Endothelial cell of umbilical vein (primary cell): ENCODE measurements at regions of chr15 and their contacts with region 1.

Region 1: GRCh38 chr15:51192521-51193280 is 98.0 kb upstream of the TNFAIP8L3 start:
- DNase-seq: peak; percentile 85
- H3K4me3 ChIP-seq: no peak overlapping the region
- H3K27ac ChIP-seq: no peak overlapping the region
- H3K4me1 ChIP-seq: peaks cover 18% of the 10 kb centered on the region
- H3K27me3 ChIP-seq: peaks cover 33 to 45% of the 10 kb centered on the region in 2 experiments
- CTCF ChIP-seq: peak; percentile 93 to 94
- POLR2A ChIP-seq: no peak

Region 2: DNA sequence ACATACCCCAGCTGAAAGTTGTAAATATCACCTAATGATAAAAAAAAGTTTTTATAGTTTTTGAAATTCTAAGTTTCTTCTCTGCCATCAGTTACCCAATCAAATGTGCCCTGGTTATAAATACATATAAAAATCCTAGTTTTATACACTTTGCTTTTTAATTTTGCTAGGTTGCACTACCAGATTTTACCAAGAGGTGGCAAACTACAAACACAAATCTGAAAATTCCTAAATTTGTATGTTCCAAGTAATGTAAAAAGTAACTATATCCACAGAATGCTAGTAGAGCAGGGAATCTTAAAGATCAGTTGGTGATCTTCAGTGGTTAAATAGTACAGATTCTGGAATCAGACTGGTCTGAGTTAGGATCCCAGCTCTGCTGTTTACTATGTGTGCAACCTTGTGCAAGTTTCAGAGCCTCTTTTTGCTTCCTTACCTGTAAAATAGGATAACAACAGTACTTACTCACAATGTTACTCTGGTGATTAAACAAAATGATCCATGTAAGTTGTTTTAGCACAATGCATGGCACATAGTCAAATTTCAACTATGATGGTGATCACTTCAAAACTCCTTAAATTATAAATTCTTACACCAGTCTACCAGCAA is 517.1 kb before region 1 on chr15:
- CTCF ChIA-PET with region 1: interaction called, 4 read pairs
- POLR2A ChIA-PET with region 1: no interaction called
- dilution Hi-C with region 1: no loop called
- intact Hi-C with region 1: loop called (anchors 5 kb)
- DNase-seq: peak; percentile 69
- H3K4me3 ChIP-seq: no peak overlapping the region
- H3K27ac ChIP-seq: no peak overlapping the region
- H3K4me1 ChIP-seq: no peaks in the 10 kb centered on the region
- H3K27me3 ChIP-seq: no peaks in the 10 kb centered on the region
- CTCF ChIP-seq: peak; percentile 36 to 41
- POLR2A ChIP-seq: no peak

Region 3: DNA sequence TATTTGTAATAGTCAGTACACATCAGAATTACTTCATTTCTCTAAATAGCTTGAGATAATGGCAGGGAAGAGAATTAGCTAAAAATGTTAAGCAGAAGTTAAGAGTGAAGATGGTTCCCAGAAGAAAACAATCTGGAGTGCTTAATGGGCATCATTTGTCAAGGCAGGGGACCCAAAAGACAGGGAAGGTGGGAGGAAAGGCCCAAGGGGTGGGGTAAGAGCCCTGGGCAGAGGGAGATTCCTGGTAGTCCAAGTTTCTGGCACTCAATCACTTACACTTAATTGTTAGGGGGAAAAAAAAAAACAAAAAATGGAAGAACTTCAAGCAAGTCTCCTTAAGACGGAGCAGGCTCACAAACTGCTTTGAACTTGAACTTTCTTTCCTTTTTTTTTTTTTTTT is 126.9 kb before region 1 on chr15:
- CTCF ChIA-PET with region 1: interaction called, 10 read pairs
- POLR2A ChIA-PET with region 1: no interaction called
- dilution Hi-C with region 1: no loop called
- intact Hi-C with region 1: no loop called
- DNase-seq: no peak
- H3K4me3 ChIP-seq: no peak overlapping the region
- H3K27ac ChIP-seq: no peak overlapping the region
- H3K4me1 ChIP-seq: no peaks in the 10 kb centered on the region
- H3K27me3 ChIP-seq: no peaks in the 10 kb centered on the region
- CTCF ChIP-seq: no peak
- POLR2A ChIP-seq: no peak

Region 4: DNA sequence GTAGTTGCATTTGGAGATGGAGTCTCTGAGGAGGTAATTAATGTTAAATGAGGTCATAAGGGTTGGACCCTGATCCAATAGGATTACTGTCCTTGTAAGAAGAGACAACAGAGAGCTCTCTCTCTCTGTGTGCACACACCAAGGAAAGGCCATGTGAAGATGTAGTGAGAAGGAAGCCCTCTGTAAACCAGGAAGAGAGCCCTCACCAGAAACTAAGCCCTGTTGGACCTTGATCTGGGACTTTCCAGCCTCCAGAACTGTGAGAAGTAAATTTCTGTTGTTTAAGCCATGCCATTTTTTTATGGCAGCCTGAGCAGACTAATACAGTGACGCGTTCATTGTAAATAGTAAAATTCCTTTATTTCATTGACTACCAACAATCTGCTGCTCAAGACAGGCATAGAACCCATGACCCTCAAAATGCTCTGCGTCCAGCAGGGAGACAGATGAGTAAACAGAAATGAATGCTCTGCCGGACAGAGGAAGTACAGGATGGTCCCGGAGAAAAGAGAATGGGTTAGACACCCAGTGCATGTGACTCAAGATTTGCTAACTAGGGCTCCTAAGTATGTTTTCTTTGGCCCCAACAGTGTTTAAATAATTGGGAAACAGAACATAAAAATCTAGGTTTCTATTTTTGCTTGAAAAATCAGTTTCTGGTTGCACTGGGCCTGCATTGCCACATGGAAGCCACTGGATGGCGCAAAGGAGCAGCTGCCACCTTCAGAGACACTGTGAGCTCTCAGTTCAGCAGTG is 60.1 kb before region 1 on chr15:
- CTCF ChIA-PET with region 1: interaction called, 51 read pairs
- POLR2A ChIA-PET with region 1: interaction called, 3 read pairs
- dilution Hi-C with region 1: no loop called
- intact Hi-C with region 1: loop called (anchors 1 kb)
- DNase-seq: peak; percentile 97
- H3K4me3 ChIP-seq: no peak overlapping the region
- H3K27ac ChIP-seq: peak overlapping the region; percentile 91
- H3K4me1 ChIP-seq: peaks cover 26% of the 10 kb centered on the region
- H3K27me3 ChIP-seq: no peaks in the 10 kb centered on the region
- CTCF ChIP-seq: peak; percentile 95 to 99
- POLR2A ChIP-seq: peak; percentile 33

Region 5: GRCh38 chr15:51203797-51204196 is 11.1 kb after region 1 on chr15:
- CTCF ChIA-PET with region 1: interaction called, 10 read pairs
- POLR2A ChIA-PET with region 1: no interaction called
- dilution Hi-C with region 1: no loop called
- intact Hi-C with region 1: no loop called
- DNase-seq: no peak
- H3K4me3 ChIP-seq: no peak overlapping the region
- H3K27ac ChIP-seq: no peak overlapping the region
- H3K4me1 ChIP-seq: no peaks in the 10 kb centered on the region
- H3K27me3 ChIP-seq: peaks cover 56 to 72% of the 10 kb centered on the region in 2 experiments
- CTCF ChIP-seq: no peak
- POLR2A ChIP-seq: no peak

Region 6: GRCh38 chr15:51401872-51402517 is 209.3 kb after region 1 on chr15:
- CTCF ChIA-PET with region 1: interaction called, 10 read pairs
- POLR2A ChIA-PET with region 1: no interaction called
- dilution Hi-C with region 1: no loop called
- intact Hi-C with region 1: no loop called
- DNase-seq: peak; percentile 13
- H3K4me3 ChIP-seq: no peak overlapping the region
- H3K27ac ChIP-seq: no peak overlapping the region
- H3K4me1 ChIP-seq: no peaks in the 10 kb centered on the region
- H3K27me3 ChIP-seq: peaks cover 68 to 69% of the 10 kb centered on the region in 2 experiments
- CTCF ChIP-seq: peak; percentile 73 to 83
- POLR2A ChIP-seq: no peak